Activated T-helper 2 cell treated with anti-CD3 and anti-CD28 coated beads, Interferon-gamma antibody, Interleukin-2, Interleukin-4, amounts not matched to agents 10 μg/mL and 5 μg/mL and 100 μg/mL, durations not matched to agents 14 hours and 24 hours and 36 hours (primary cell): ENCODE measurements at regions of chr18 and their contacts with region 1.

Region 1: DNA sequence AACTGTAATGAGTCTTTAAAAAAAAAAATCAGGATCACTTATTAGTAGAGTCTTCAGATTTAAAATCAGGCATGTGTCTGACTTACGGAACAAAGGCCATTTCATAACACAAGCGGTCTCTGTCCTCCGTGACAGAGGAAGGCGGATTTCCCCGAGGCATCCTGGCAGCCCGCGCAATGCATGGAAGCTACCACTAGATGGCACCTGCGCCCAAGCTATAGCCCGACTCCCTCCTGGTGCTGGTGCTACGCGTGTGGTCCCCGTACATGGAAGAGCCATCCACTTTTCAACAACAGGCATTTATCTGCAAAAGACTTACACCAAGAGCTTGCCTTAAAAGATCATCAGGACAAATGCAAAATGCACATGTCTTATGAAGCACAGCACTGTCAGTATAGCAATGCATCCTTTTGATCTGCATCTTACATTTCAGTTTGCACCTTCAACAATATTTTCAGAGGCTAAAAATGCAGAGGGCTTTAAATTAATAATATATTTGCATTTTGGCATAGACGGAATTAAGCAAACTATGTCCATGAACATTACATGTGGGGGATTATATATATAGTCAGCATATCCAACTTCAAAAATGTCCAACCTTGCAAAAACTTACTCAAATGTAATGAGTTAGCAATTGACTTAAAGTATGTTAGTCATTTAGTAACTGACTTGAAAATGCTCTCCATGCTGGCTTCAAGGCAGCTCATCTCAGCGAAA is 96.0 kb downstream of the ZNF516 start:
- DNase-seq: peak; percentile 57
- H3K4me3 Mint-ChIP-seq: no peak overlapping the region
- H3K27ac Mint-ChIP-seq: no peak overlapping the region
- H3K4me1 Mint-ChIP-seq: peaks cover 4% of the 10 kb centered on the region
- H3K27me3 Mint-ChIP-seq: peaks cover 4% of the 10 kb centered on the region

Region 2: DNA sequence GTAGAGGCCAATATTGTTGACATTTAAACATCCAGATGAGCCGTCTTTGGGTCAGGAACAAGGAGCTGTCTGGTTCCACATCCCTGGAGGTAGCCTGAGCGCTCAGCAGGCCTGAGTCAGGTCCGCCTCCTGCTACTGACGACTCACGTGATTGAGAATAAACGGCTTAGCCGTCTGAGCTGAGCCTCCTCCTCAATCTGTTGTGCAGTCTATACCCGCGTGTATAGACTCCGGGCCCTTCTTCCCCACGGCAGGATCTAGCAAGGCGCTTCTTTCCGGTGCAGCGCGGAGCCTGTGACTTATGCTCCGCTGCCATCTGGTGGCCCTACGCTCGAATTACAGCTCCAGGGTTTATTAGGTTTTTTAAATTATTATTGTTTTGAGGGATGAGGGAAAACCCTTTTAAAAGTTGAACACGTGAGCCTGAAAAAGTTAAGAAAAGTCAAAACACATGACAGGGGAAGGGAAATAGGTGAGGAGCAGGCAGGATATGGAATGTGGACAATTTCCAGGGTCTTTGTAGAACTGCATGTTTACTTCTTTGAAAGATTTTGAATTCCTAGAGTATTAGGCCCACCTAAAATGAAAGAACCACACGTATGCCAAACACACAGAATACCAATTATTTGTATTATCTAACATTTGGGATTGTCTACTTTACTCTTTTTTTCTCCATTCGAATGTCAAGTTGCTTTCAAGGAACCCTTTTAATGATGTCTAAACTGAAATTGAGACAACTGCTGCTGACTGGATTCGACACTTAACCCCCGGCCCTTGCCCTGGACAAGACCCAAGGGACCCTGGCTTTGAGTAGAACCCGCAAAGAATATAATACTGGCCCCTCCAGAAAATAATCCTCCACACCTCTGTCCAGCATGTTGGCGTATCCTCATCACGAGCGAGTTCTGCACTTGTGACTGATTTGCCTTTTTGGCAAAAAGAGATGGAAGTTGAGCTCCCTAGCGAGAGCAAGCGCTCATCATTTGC is 310.9 kb after region 1 on chr18:
- intact Hi-C with region 1: loop called (anchors 1 kb)
- DNase-seq: peak; percentile 58
- H3K4me3 Mint-ChIP-seq: no peak overlapping the region
- H3K27ac Mint-ChIP-seq: no peak overlapping the region
- H3K4me1 Mint-ChIP-seq: peaks cover 13% of the 10 kb centered on the region
- H3K27me3 Mint-ChIP-seq: peaks cover 15% of the 10 kb centered on the region